HCT116 (cell line): ENCODE measurements at regions of chr5 and their contacts with region 1.

Region 1: DNA sequence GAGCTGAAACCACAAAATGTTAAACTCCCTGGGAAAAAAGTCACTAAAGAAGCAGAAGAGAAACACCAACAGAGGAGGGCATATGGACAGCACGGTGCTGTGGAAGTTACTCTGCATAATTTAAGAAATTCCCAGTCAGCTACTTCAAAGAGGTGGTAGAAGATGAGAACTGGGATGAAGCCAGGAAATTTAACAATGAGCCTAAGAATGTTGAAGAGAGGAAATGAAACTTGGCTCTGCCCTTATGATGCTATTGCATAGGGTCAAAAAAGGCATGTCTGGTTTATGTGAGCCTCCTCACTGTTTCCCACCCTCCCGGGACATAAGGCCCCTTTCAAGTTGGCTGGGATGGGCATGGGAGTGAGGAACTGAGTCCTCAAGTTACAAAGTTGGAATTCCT is 25.4 kb upstream of the SNX18 start:
- DNase-seq: no peak
- ATAC-seq: no peak
- H3K4me3 ChIP-seq: no peak overlapping the region
- H3K27ac ChIP-seq: no peak overlapping the region
- H3K4me1 ChIP-seq: no peaks in the 10 kb centered on the region
- H3K27me3 ChIP-seq: no peaks in the 10 kb centered on the region
- CTCF ChIP-seq: no peak
- POLR2A ChIP-seq: no peak
- RAD21 ChIP-seq: no peak

Region 2: GRCh38 chr5:54415896-54416601 is 76.1 kb before region 1 on chr5:
- CTCF ChIA-PET with region 1: interaction called, 13 read pairs
- POLR2A ChIA-PET with region 1: no interaction called
- RAD21 ChIA-PET with region 1: no interaction called
- intact Hi-C with region 1: no loop called
- DNase-seq: no peak
- ATAC-seq: no peak; the same call in 1 of the 2 replicates
- H3K4me3 ChIP-seq: no peak overlapping the region
- H3K27ac ChIP-seq: no peak overlapping the region
- H3K4me1 ChIP-seq: peaks cover 0 to 5% of the 10 kb centered on the region in 2 experiments; a peak in 1 of 4 replicates
- H3K27me3 ChIP-seq: no peaks in the 10 kb centered on the region
- CTCF ChIP-seq: no peak
- POLR2A ChIP-seq: no peak
- RAD21 ChIP-seq: no peak

Region 3: DNA sequence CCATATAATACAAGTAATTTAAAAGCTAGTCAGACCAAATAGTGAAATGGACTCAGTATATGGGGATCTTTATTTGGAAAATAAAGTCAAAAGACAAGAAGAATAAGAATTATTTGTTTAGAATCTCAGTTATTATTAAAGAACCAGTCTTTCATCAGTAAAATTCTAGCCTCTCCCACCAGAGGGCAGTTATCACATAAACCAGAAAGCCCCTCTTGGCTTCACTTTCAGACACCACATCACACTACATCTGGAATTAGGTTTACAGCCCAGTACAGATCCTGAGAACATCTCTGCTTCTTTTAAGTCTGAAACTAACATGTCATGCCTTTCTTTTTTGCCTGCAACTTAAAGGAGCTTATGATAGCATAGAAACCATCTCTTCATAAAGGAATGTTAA is 48.9 kb before region 1 on chr5:
- CTCF ChIA-PET with region 1: interaction called, 6 read pairs
- POLR2A ChIA-PET with region 1: no interaction called
- RAD21 ChIA-PET with region 1: interaction called in 1 of 2 experiments, 3 read pairs
- intact Hi-C with region 1: loop called (anchors 1 kb)
- DNase-seq: peak; percentile 8
- ATAC-seq: peak; percentile 63
- H3K4me3 ChIP-seq: no peak overlapping the region
- H3K27ac ChIP-seq: no peak overlapping the region
- H3K4me1 ChIP-seq: no peaks in the 10 kb centered on the region
- H3K27me3 ChIP-seq: no peaks in the 10 kb centered on the region; the same call in 1 of the 2 replicates
- CTCF ChIP-seq: peak; percentile 28 to 59 (median 56); a peak in 5 of 6 replicates
- POLR2A ChIP-seq: no peak
- RAD21 ChIP-seq: peak; percentile 43; the same call in 1 of the 2 replicates

Region 4: GRCh38 chr5:54480296-54480695 is 11.9 kb before region 1 on chr5:
- CTCF ChIA-PET with region 1: interaction called, 12 read pairs
- POLR2A ChIA-PET with region 1: no interaction called
- RAD21 ChIA-PET with region 1: no interaction called
- intact Hi-C with region 1: no loop called
- DNase-seq: no peak
- ATAC-seq: no peak
- H3K4me3 ChIP-seq: no peak overlapping the region
- H3K27ac ChIP-seq: no peak overlapping the region
- H3K4me1 ChIP-seq: no peaks in the 10 kb centered on the region
- H3K27me3 ChIP-seq: no peaks in the 10 kb centered on the region
- CTCF ChIP-seq: no peak
- POLR2A ChIP-seq: no peak
- RAD21 ChIP-seq: no peak

Region 5: GRCh38 chr5:54517174-54518092 is 25.3 kb after region 1 on chr5 and contains the start of gene SNX18:
- CTCF ChIA-PET with region 1: interaction called, 11 read pairs
- POLR2A ChIA-PET with region 1: no interaction called
- RAD21 ChIA-PET with region 1: no interaction called
- intact Hi-C with region 1: no loop called
- DNase-seq: peak; percentile 74
- ATAC-seq: peak; percentile 88
- H3K4me3 ChIP-seq: peak within 1 kb of the TSS; percentile 65 to 70
- H3K27ac ChIP-seq: peak within 1 kb of the TSS; percentile 78
- H3K4me1 ChIP-seq: peaks cover 2 to 16% of the 10 kb centered on the region in 2 experiments; a peak in 1 of 4 replicates
- H3K27me3 ChIP-seq: no peaks in the 10 kb centered on the region
- CTCF ChIP-seq: peak; percentile 89 to 95 (median 92)
- POLR2A ChIP-seq: peak; percentile 71
- RAD21 ChIP-seq: peak; percentile 93
- total RNA-seq, gene SNX18: 16.0 TPM

Region 6: GRCh38 chr5:54895816-54896341 is 403.7 kb after region 1 on chr5:
- CTCF ChIA-PET with region 1: interaction called, 15 read pairs
- POLR2A ChIA-PET with region 1: no interaction called
- RAD21 ChIA-PET with region 1: no interaction called
- intact Hi-C with region 1: no loop called
- DNase-seq: peak; percentile 39
- ATAC-seq: peak; percentile 90
- H3K4me3 ChIP-seq: no peak overlapping the region
- H3K27ac ChIP-seq: no peak overlapping the region
- H3K4me1 ChIP-seq: no peaks in the 10 kb centered on the region
- H3K27me3 ChIP-seq: peaks cover 39% of the 10 kb centered on the region
- CTCF ChIP-seq: peak; percentile 51 to 60 (median 59); a peak in 5 of 6 replicates
- POLR2A ChIP-seq: no peak
- RAD21 ChIP-seq: peak; percentile 74